ENCODE measurements at regions of chr7 and their contacts with region 1.

Region 1: DNA sequence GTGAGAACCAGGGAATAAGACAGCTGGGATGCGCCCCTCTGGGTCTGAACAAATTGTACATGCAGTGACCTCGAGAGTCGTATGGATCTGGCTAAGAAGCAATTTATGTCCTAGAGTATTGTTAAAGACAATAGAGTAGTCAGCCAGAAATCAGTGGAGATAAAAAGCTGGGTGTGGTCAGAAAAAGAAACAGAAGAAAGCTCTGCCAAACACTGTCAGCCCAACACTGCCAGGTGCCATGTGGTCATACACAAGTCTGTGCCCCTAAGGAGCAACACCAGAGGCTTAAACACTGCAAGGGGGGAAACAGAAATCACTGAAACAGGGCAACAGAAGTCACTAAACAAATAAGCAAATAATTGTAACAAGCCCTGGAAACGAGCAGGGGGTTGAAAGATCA is 62.1 kb downstream of the CNOT4 start:
- DNase-seq: no peak
- ATAC-seq: no peak
- H3K4me3 ChIP-seq: no peak overlapping the region
- H3K4me3 Mint-ChIP-seq: no peak overlapping the region
- H3K27ac ChIP-seq: no peak overlapping the region
- H3K27ac Mint-ChIP-seq: peak overlapping the region; percentile 55
- H3K4me1 ChIP-seq: peaks cover 4% of the 10 kb centered on the region
- H3K4me1 Mint-ChIP-seq: peaks cover 67% of the 10 kb centered on the region
- H3K27me3 ChIP-seq: no peaks in the 10 kb centered on the region
- H3K27me3 Mint-ChIP-seq: no peaks in the 10 kb centered on the region
- CTCF ChIP-seq: no peak

Region 2: DNA sequence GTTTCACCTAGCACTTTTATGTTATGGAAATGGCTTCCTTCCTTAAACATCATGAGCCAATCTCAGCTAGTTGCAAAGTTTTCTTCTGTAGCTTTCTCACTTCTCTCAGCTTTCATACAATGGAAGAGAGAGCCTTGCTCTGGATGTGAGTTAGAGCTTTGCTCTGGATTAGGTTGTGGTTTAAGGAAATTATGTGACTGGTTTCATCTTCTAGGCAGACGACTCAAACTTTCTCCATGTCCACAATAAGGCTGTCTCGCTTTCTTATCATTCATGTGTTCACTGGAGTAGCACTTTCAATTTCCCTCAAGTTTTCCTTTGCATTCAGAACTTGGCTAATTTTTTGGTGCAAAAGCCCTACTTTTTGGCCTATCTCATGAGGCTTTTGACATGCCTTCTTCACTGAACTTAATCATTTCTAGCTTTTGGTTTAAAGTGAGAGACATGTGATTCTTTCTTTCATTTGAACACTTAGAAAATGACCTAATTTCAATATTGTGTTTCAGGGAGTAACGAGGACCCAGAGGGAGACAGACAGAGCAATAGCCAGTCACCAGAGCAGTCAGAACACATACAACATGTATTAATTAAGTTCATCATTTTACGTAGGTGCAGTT is 12.3 kb after region 1 on chr7:
- CTCF ChIA-PET with region 1: interaction called, 3 read pairs
- POLR2A ChIA-PET with region 1: no interaction called
- intact Hi-C with region 1: loop called in 1 of 2 experiments (anchors 2 kb)
- DNase-seq: no peak
- ATAC-seq: no peak
- H3K4me3 ChIP-seq: no peak overlapping the region
- H3K4me3 Mint-ChIP-seq: no peak overlapping the region
- H3K27ac ChIP-seq: no peak overlapping the region
- H3K27ac Mint-ChIP-seq: no peak overlapping the region
- H3K4me1 ChIP-seq: peaks cover 20% of the 10 kb centered on the region
- H3K4me1 Mint-ChIP-seq: peaks cover 69% of the 10 kb centered on the region
- H3K27me3 ChIP-seq: no peaks in the 10 kb centered on the region
- H3K27me3 Mint-ChIP-seq: no peaks in the 10 kb centered on the region
- CTCF ChIP-seq: no peak